ENCODE measurements at regions of chr3 and their contacts with region 1.

Region 1: DNA sequence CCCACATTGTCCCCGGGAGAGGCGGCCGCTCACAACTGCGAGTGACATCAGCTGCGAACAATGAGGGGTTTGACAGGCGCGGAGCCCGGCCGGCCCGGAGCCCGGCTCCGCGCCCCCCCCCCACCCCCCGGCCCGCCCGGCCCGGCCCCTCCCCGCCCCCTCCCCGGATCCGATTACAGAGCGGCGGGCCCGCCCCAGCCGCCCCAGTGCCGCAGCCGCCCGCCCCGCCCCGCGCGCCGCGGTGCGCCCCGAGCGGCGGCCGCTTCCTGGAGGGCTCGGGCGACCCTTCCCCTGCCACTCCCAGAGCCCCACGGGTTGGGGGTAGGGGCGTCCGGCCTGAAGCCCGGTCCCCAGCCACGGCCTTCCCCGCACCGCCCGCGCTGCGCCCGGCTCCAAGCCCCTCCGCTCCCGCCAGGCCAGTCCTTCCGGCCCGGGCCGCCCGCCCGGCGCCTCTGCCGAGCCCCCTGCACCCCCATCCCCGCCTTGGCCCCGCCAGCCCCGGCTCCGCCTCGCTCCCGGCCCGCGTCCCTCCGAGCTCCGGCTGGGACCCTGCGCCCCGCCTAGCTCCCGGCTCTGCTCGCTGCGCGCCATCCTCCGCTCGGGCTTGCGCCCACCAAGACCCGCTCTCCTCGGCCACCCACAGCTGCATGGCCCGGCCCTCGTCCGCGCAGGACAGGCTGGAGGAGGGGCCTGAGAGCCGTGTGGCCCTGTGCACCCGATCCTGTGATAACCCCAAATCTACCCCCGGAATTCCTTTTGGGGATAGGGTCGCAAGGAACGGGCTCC is at the start of gene PCBP4:
- DNase-seq: peak; percentile 57
- CTCF ChIP-seq: no peak

Region 2: DNA sequence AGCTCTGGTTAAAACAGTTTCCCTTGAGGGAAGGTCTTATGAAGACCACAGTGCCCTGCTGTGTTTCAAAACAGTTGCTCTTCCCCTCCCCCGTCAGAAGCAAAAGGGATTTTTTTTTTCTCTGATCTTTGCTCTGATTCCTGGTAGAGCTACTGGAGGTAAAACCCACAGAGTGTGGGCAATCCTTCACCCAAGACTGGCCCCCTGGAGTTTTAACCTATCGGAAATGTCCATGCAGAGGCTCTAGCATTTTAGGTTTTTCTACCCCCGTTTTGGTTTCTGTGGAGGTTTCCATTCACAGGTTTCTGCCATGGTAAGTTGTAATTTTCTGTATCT is 233.0 kb before region 1 on chr3:
- CTCF ChIA-PET with region 1: no interaction called
- POLR2A ChIA-PET with region 1: no interaction called
- DNase-seq: no peak
- CTCF ChIP-seq: no peak

Region 3: DNA sequence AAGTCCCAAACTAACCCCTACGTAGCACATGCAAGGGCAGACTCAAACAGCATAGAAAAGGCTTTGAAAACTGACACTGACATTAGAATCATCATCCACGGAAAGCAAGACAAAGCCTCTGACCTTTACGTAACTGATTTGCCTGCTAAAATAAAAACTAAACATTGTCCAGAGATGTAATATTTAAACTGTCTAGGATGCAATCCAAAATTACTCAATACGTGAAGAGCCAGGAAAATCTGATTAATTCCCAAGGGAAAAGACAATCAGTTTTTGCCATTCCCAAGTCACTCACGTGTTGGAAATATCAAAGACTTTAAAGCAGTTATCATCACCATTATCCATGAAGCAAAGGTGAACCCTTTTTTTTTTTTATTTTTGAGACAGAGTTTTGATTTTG is 51.2 kb before region 1 on chr3:
- CTCF ChIA-PET with region 1: no interaction called
- POLR2A ChIA-PET with region 1: no interaction called
- DNase-seq: no peak
- CTCF ChIP-seq: no peak

Region 4: GRCh38 chr3:51982782-51983577 is 15.4 kb after region 1 on chr3 and contains the start of gene ACY1:
- CTCF ChIA-PET with region 1: interaction called, 17 read pairs
- POLR2A ChIA-PET with region 1: no interaction called
- DNase-seq: peak; percentile 95
- CTCF ChIP-seq: no peak

Region 5: GRCh38 chr3:52171514-52172261 is 204.1 kb after region 1 on chr3:
- CTCF ChIA-PET with region 1: no interaction called
- POLR2A ChIA-PET with region 1: no interaction called
- DNase-seq: no peak
- CTCF ChIP-seq: no peak